ENCODE measurements at regions of chr13 and their contacts with region 1.

Region 1: DNA sequence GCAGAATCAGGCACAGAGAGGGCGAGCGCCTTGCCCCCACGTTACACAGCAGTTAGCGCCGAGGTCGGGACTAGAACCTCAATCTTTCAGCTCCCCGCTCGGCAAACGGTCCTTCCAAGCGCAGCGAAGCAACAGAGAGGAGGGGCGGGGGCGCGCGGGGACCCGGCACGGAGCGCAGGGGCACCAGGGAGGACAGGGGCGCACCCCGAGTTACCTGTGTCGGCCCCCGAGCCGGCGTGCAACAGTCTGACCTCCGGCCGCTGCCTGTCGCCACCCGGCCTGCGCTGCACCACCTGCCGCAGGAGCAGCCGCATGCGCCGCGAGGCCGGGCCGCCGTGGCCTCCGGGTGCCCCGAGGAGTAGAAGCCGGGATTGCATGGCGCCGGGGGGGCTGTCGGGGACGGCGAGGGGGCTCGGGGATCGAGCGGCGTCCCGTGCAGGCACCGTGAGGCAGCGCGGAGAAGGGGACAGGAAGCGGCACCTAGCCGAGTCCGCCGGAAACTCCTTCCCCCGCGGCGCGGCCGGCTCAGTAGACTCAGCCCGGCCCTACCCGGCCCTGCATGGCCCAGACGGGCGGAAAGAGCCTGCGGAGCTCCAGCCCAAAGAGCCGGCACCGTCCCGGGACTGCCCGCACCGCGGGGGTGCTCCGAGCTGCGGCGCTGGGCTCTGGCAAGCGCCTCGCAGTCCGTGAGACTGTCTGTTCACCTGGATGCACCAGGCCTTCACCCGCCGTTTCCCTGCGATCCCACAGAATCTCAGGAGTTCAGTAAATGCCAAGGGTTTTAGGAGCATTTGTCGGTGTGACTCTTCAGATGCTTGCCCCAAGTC is at the start of gene VWA8:
- DNase-seq: peak; percentile 55 to 86
- ATAC-seq: peak; percentile 98
- H3K4me3 ChIP-seq: peak within 1 kb of the TSS; percentile 68
- H3K27ac ChIP-seq: peak within 1 kb of the TSS; percentile 92 to 97
- H3K4me1 ChIP-seq: peaks cover 14% of the 10 kb centered on the region; the same call in 2 of the 3 replicates
- CTCF ChIP-seq: no peak
- EP300 ChIP-seq: no peak
- POLR2A ChIP-seq: peak; percentile 66
- RAD21 ChIP-seq: peak in 1 of 2 experiments; percentile 25; a peak in 2 of 5 replicates
- polyA plus RNA-seq, gene VWA8: 15.2 and 15.3 TPM in 2 replicates

Region 2: DNA sequence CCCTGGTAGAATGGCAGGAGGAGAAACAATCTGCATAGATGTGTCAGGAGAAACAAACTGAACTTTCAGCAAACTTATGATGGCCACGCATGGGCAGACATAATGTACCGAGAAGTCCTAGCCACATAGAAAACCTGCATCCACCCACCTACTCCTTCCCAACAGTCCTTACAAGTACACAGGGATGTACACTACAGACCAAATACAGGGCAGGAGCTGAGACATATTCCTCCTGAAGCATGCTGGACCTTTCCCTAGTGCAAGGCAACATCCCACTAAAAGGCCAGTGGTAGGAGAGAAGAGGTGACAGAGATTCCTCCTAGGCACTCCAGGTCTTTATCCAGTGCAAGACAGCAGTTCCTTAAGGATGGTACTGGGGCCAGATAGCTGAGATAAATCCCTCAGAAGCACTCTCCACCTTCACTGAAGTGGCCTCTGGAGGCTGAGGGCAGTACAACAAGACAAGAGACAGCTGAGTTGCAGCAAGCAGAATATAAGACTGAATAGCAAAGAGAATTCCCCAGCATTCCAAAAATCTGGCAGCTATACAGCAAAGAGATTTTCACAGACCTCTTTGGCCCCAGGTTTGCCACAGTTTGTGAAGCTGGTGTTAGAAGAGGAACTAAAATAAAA is 18.3 kb before region 1 on chr13:
- CTCF ChIA-PET with region 1: interaction called, 11 read pairs
- POLR2A ChIA-PET with region 1: no interaction called
- DNase-seq: peak; percentile 6 to 55
- ATAC-seq: peak; percentile 82 to 92
- H3K4me3 ChIP-seq: no peak overlapping the region
- H3K27ac ChIP-seq: no peak overlapping the region
- H3K4me1 ChIP-seq: peaks cover 21% of the 10 kb centered on the region
- CTCF ChIP-seq: 0 out of 3 replicates have a peak, but pooled peaks have one; percentile 8
- EP300 ChIP-seq: no peak
- POLR2A ChIP-seq: no peak
- RAD21 ChIP-seq: peak; percentile 29 to 31; a peak in 2 of 5 replicates

Region 3: DNA sequence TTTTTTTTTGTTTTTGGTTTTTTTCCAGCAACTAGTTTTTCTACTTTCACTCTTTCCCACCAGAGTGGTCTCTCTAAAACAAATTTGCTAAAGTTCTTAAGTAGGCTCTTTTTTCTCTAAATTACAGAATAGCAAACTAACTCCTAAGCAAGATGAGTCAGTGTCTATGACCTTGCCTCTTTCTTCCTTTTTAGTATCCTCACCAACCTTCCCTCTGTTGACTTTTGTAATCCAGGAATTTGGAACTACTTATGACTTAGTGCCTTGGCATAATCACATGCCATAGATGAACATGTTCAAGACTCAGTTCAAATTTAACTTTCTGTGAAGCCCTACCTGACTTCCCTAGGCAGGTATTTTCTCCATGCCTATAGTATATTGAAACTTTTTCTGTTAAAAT is 278.8 kb after region 1 on chr13:
- CTCF ChIA-PET with region 1: no interaction called
- POLR2A ChIA-PET with region 1: no interaction called
- DNase-seq: peak in 1 of 2 experiments; percentile 12
- ATAC-seq: no peak
- H3K4me3 ChIP-seq: no peak overlapping the region
- H3K27ac ChIP-seq: peak overlapping the region; percentile 25 to 44; a peak in 1 of 6 replicates
- H3K4me1 ChIP-seq: peaks cover 18% of the 10 kb centered on the region
- CTCF ChIP-seq: no peak
- EP300 ChIP-seq: no peak
- POLR2A ChIP-seq: no peak
- RAD21 ChIP-seq: no peak